Posterior vena cava (tissue), 2 donors: ENCODE measurements at regions of chr10 and their contacts with region 1.

Region 1: GRCh38 chr10:99906470-99906869 is 103.3 kb downstream of the DNMBP start:
- DNase-seq: no peak

Region 2: DNA sequence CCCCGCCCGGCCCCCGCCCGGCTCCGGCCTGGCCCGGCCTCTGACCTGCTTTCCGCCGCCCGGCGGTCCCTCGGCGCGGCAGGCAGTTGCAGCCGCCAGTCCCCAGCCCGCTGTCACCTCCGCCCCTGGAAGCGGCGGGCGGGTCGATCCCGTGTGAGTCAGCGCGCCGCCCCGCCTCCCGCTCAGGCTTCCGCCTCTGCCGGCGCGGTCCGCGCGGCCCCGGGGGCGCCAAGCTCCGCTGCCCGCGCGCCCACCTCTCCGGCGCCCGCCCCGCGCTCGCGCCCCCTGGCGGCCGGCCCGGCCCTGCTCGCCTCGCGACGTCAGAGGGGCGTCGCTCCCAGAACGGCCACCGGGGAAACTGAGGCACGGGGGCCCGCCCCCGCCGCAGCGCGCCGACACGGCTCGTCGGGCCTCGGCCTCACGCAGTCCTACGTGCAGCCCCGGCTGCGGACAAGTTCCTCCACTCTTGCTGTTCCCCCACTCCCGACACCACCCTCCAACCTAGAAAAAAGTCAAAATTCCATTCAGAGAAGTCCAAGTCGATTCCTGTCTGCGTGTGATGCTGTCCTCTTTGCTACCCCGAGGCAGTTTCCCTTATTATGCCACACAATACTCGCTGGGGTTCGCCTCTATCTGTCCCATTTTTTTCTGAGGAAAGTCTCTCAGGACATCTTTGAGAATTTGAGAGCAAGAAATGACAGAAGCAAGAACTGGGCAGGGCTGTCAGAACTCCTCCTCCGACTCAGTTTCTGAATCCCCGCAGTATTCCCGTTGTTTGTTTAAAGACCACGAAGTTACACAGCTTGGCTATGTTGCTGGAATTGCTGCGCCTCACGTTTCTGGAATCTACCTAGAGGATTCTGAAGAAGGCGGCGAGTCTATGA is 103.6 kb after region 1 on chr10 and contains the start of gene DNMBP:
- intact Hi-C with region 1: loop called in 1 of 2 experiments (anchors 10 kb)
- DNase-seq: peak; percentile 95
- total RNA-seq, gene DNMBP: 13.1 to 15.5 TPM